Activated CD4-positive, alpha-beta T cell treated with anti-CD3 and anti-CD28 coated beads for 36 hours (primary cell): ENCODE measurements at regions of chr14 and their contacts with region 1.

Region 1: DNA sequence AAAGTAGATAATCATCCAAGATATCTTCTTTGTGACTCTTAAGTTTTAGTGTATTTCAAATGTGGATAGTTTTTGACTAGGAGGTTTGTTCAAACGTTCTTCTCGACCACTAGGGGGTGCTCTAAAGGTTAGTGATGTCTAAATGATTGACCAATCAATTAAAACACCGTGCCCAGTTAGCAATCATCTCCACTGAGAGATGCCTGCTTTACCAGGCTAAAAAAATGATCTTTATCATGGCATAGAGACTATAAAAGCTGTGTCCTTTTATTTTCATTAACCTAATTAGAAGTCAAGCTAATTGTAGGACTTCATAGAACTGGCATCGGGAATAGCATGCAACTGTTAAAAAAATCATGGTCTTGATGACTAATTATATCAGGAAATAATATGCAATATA is 153.9 kb downstream of the PRKCH start:
- DNase-seq: no peak
- ATAC-seq: no peak
- H3K4me3 Mint-ChIP-seq: no peak overlapping the region
- H3K27ac Mint-ChIP-seq: peak overlapping the region; percentile 84
- H3K4me1 Mint-ChIP-seq: peaks cover 91% of the 10 kb centered on the region
- H3K27me3 Mint-ChIP-seq: no peaks in the 10 kb centered on the region

Region 2: DNA sequence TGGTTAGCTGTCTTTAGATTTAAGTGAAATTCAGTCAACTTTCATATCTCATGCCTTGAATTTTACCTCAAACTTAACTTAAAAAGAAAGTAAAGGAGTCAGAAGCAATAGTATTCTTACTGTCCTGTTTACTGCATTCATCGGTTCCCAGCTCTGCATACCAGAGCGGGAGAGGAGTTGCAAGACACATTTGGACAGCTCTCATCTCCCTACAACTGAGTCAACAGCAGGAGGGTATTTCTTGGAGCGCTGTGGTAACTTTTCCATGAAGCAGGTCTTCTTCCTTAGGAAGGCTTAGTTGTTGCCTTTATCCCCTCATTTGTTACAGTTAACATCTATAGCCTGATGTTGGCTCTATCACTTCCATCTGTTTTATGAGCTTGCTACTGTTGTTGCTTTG is 559.5 kb before region 1 on chr14:
- CTCF ChIA-PET with region 1: no interaction called
- POLR2A ChIA-PET with region 1: no interaction called
- intact Hi-C with region 1: no loop called
- DNase-seq: no peak
- ATAC-seq: no peak
- H3K4me3 Mint-ChIP-seq: no peak overlapping the region
- H3K27ac Mint-ChIP-seq: no peak overlapping the region
- H3K4me1 Mint-ChIP-seq: no peaks in the 10 kb centered on the region
- H3K27me3 Mint-ChIP-seq: no peaks in the 10 kb centered on the region

Region 3: GRCh38 chr14:61461808-61462275 is 13.5 kb before region 1 on chr14:
- CTCF ChIA-PET with region 1: interaction called, 7 read pairs
- POLR2A ChIA-PET with region 1: no interaction called
- intact Hi-C with region 1: loop called in 1 of 2 experiments (anchors 2 kb)
- DNase-seq: peak; percentile 51
- ATAC-seq: peak; percentile 45
- H3K4me3 Mint-ChIP-seq: no peak overlapping the region
- H3K27ac Mint-ChIP-seq: peak overlapping the region; percentile 92
- H3K4me1 Mint-ChIP-seq: peaks cover 77% of the 10 kb centered on the region
- H3K27me3 Mint-ChIP-seq: no peaks in the 10 kb centered on the region

Region 4: GRCh38 chr14:61525293-61526011 is 50.1 kb after region 1 on chr14:
- CTCF ChIA-PET with region 1: interaction called, 13 read pairs
- POLR2A ChIA-PET with region 1: interaction called, 5 read pairs
- intact Hi-C with region 1: loop called (anchors 1 kb)
- DNase-seq: peak; percentile 86
- ATAC-seq: peak; percentile 84
- H3K4me3 Mint-ChIP-seq: peak overlapping the region; percentile 6
- H3K27ac Mint-ChIP-seq: peak overlapping the region; percentile 86
- H3K4me1 Mint-ChIP-seq: peaks cover 87% of the 10 kb centered on the region
- H3K27me3 Mint-ChIP-seq: no peaks in the 10 kb centered on the region

Region 5: GRCh38 chr14:61598980-61599379 is 123.7 kb after region 1 on chr14:
- CTCF ChIA-PET with region 1: interaction called, 6 read pairs
- POLR2A ChIA-PET with region 1: interaction called, 5 read pairs
- intact Hi-C with region 1: loop called (anchors 1 kb)
- DNase-seq: peak; percentile 47
- ATAC-seq: peak; percentile 49
- H3K4me3 Mint-ChIP-seq: no peak overlapping the region
- H3K27ac Mint-ChIP-seq: peak overlapping the region; percentile 59
- H3K4me1 Mint-ChIP-seq: peaks cover 55% of the 10 kb centered on the region
- H3K27me3 Mint-ChIP-seq: no peaks in the 10 kb centered on the region

Region 6: GRCh38 chr14:61719344-61720293 is 244.3 kb after region 1 on chr14:
- CTCF ChIA-PET with region 1: interaction called, 13 read pairs
- POLR2A ChIA-PET with region 1: no interaction called
- intact Hi-C with region 1: no loop called
- DNase-seq: no peak
- ATAC-seq: peak; percentile 52
- H3K4me3 Mint-ChIP-seq: peak overlapping the region; percentile 41
- H3K27ac Mint-ChIP-seq: peak overlapping the region; percentile 81
- H3K4me1 Mint-ChIP-seq: peaks cover 83% of the 10 kb centered on the region
- H3K27me3 Mint-ChIP-seq: no peaks in the 10 kb centered on the region

Region 7: GRCh38 chr14:62373889-62374394 is 898.6 kb after region 1 on chr14:
- CTCF ChIA-PET with region 1: no interaction called
- POLR2A ChIA-PET with region 1: no interaction called
- intact Hi-C with region 1: no loop called
- DNase-seq: no peak
- ATAC-seq: no peak
- H3K4me3 Mint-ChIP-seq: no peak overlapping the region
- H3K27ac Mint-ChIP-seq: no peak overlapping the region
- H3K4me1 Mint-ChIP-seq: no peaks in the 10 kb centered on the region
- H3K27me3 Mint-ChIP-seq: no peaks in the 10 kb centered on the region